ENCODE measurements at regions of chr10 and their contacts with region 1.

Region 1: GRCh38 chr10:114060456-114060855 is 16.8 kb downstream of the ADRB1 start:
- DNase-seq: no peak
- H3K4me3 Mint-ChIP-seq: no peak overlapping the region
- H3K27ac Mint-ChIP-seq: no peak overlapping the region
- H3K4me1 Mint-ChIP-seq: peaks cover 11% of the 10 kb centered on the region
- H3K27me3 Mint-ChIP-seq: no peaks in the 10 kb centered on the region
- CTCF ChIP-seq: no peak

Region 2: GRCh38 chr10:113859261-113859660 is 201.2 kb before region 1 on chr10:
- CTCF ChIA-PET with region 1: interaction called, 3 read pairs
- POLR2A ChIA-PET with region 1: interaction called, 10 read pairs
- intact Hi-C with region 1: no loop called
- DNase-seq: no peak
- H3K4me3 Mint-ChIP-seq: no peak overlapping the region
- H3K27ac Mint-ChIP-seq: no peak overlapping the region
- H3K4me1 Mint-ChIP-seq: peaks cover 11% of the 10 kb centered on the region
- H3K27me3 Mint-ChIP-seq: no peaks in the 10 kb centered on the region
- CTCF ChIP-seq: no peak

Region 3: DNA sequence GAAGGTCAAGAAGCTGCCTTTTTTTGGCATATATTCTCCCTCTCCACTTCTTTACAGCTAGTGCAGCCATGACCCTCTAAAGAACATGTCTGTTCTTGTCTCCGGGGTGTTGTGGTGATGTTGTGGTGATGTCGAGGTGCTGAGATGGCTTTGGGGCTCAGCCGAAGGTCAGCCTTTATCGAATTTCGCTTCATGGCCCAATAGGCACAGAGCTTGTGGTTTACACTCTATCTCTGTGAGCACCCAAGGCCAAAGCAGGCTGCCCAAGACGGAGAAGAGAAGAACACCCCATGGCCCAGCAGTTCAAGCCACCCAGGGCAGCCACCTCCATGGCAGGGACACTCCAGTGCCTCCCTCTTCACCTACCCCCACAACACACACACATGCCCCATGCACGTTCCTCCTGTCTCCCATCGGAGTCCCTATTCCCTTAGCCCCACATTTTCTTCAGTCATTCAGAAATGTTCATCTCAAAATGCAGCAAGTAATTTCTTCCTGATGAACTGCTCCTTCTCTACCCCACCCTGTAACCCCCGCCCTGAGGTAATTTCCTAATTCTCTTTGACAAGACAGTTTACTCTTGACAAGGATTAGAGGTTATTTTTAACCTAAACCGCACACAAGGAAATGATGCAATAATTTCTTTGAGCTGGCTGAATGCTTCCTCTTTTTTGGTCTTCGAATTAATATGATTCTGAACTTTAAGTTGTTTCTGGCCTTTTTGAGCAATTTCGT is 35.4 kb before region 1 on chr10:
- CTCF ChIA-PET with region 1: no interaction called
- POLR2A ChIA-PET with region 1: interaction called, 10 read pairs
- intact Hi-C with region 1: no loop called
- DNase-seq: peak; percentile 73
- H3K4me3 Mint-ChIP-seq: no peak overlapping the region
- H3K27ac Mint-ChIP-seq: peak overlapping the region; percentile 87
- H3K4me1 Mint-ChIP-seq: peaks cover 41% of the 10 kb centered on the region
- H3K27me3 Mint-ChIP-seq: no peaks in the 10 kb centered on the region
- CTCF ChIP-seq: no peak

Region 4: DNA sequence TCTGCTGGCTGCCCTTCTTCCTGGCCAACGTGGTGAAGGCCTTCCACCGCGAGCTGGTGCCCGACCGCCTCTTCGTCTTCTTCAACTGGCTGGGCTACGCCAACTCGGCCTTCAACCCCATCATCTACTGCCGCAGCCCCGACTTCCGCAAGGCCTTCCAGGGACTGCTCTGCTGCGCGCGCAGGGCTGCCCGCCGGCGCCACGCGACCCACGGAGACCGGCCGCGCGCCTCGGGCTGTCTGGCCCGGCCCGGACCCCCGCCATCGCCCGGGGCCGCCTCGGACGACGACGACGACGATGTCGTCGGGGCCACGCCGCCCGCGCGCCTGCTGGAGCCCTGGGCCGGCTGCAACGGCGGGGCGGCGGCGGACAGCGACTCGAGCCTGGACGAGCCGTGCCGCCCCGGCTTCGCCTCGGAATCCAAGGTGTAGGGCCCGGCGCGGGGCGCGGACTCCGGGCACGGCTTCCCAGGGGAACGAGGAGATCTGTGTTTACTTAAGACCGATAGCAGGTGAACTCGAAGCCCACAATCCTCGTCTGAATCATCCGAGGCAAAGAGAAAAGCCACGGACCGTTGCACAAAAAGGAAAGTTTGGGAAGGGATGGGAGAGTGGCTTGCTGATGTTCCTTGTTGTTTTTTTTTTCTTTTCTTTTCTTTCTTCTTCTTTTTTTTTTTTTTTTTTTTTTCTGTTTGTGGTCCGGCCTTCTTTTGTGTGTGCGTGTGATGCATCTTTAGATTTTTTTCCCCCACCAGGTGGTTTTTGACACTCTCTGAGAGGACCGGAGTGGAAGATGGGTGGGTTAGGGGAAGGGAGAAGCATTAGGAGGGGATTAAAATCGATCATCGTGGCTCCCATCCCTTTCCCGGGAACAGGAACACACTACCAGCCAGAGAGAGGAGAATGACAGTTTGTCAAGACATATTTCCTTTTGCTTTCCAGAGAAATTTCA is 15.0 kb before region 1 on chr10:
- CTCF ChIA-PET with region 1: interaction called, 6 read pairs
- POLR2A ChIA-PET with region 1: interaction called, 12 read pairs
- intact Hi-C with region 1: no loop called
- DNase-seq: no peak
- H3K4me3 Mint-ChIP-seq: peak overlapping the region; percentile 36
- H3K27ac Mint-ChIP-seq: no peak overlapping the region
- H3K4me1 Mint-ChIP-seq: no peaks in the 10 kb centered on the region
- H3K27me3 Mint-ChIP-seq: no peaks in the 10 kb centered on the region
- CTCF ChIP-seq: no peak

Region 5: GRCh38 chr10:115022733-115023132 is 962.3 kb after region 1 on chr10:
- CTCF ChIA-PET with region 1: no interaction called
- POLR2A ChIA-PET with region 1: no interaction called
- intact Hi-C with region 1: no loop called
- DNase-seq: no peak
- H3K4me3 Mint-ChIP-seq: no peak overlapping the region
- H3K27ac Mint-ChIP-seq: no peak overlapping the region
- H3K4me1 Mint-ChIP-seq: no peaks in the 10 kb centered on the region
- H3K27me3 Mint-ChIP-seq: peaks cover 19% of the 10 kb centered on the region
- CTCF ChIP-seq: no peak

Measured in MCF 10A (cell line).